Right cardiac atrium (tissue), 5 donors: ENCODE measurements at regions of chr2 and their contacts with region 1.

Region 1: GRCh38 chr2:71798266-71799012 is 345.1 kb downstream of the DYSF start:
- DNase-seq: peak in 1 of 3 donors; percentile 75
- ATAC-seq: peak; percentile 34 to 58
- H3K4me3 ChIP-seq: no peak overlapping the region
- H3K27ac ChIP-seq: no peak overlapping the region
- H3K4me1 ChIP-seq: peaks cover 8% of the 10 kb centered on the region
- H3K27me3 ChIP-seq: no peaks in the 10 kb centered on the region

Region 2: DNA sequence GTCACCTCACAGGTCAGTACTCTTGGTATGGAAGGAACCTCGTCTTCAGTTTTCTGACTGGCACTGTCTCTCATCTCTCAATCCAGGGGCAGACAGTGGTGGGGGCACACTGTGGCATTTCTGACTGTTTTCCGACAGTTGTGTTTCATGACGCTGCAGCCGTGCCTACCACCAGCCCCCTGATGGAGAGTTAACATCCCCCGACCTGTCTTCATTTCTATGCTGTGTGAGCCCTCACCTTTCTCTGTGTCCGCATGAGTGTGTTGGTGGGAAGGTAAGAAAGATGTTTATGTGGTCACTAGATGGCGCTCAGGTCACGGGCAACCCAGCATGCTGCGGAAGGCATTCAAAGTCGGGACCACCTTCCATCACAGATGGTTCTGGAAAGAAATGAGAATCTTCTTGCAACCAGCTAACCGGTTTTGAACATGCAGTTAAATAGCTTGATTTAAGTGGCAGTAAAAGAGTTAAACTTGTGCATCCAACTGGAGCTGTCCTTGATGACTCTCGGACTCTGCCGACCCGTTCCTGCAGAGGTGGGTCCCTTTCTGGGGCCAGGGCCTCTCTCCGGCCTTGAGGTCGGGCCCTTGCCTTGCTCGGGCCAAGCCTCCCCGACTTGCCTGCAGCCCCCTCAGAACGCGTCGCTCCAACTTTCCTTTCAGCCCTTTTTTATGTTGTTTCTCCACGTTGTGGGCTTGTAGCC is 252.7 kb before region 1 on chr2:
- intact Hi-C with region 1: loop called in 2 of 4 experiments (anchors 5 to 10 kb)
- DNase-seq: peak in 2 of 3 donors; percentile 61 to 74
- ATAC-seq: peak; percentile 66 to 75
- H3K4me3 ChIP-seq: no peak overlapping the region
- H3K27ac ChIP-seq: peak overlapping the region; percentile 50
- H3K4me1 ChIP-seq: no peaks in the 10 kb centered on the region
- H3K27me3 ChIP-seq: no peaks in the 10 kb centered on the region

Region 3: GRCh38 chr2:71558300-71559051 is 240.0 kb before region 1 on chr2:
- intact Hi-C with region 1: loop called in 1 of 4 experiments (anchors 10 kb)
- DNase-seq: peak in 1 of 3 donors; percentile 33
- ATAC-seq: no peak
- H3K4me3 ChIP-seq: no peak overlapping the region
- H3K27ac ChIP-seq: no peak overlapping the region
- H3K4me1 ChIP-seq: no peaks in the 10 kb centered on the region
- H3K27me3 ChIP-seq: no peaks in the 10 kb centered on the region

Region 4: GRCh38 chr2:71609958-71610357 is 188.5 kb before region 1 on chr2:
- intact Hi-C with region 1: loop called (anchors 10 kb)
- DNase-seq: no peak
- ATAC-seq: no peak
- H3K4me3 ChIP-seq: no peak overlapping the region
- H3K27ac ChIP-seq: no peak overlapping the region
- H3K4me1 ChIP-seq: peaks cover 12% of the 10 kb centered on the region
- H3K27me3 ChIP-seq: no peaks in the 10 kb centered on the region

Region 5: DNA sequence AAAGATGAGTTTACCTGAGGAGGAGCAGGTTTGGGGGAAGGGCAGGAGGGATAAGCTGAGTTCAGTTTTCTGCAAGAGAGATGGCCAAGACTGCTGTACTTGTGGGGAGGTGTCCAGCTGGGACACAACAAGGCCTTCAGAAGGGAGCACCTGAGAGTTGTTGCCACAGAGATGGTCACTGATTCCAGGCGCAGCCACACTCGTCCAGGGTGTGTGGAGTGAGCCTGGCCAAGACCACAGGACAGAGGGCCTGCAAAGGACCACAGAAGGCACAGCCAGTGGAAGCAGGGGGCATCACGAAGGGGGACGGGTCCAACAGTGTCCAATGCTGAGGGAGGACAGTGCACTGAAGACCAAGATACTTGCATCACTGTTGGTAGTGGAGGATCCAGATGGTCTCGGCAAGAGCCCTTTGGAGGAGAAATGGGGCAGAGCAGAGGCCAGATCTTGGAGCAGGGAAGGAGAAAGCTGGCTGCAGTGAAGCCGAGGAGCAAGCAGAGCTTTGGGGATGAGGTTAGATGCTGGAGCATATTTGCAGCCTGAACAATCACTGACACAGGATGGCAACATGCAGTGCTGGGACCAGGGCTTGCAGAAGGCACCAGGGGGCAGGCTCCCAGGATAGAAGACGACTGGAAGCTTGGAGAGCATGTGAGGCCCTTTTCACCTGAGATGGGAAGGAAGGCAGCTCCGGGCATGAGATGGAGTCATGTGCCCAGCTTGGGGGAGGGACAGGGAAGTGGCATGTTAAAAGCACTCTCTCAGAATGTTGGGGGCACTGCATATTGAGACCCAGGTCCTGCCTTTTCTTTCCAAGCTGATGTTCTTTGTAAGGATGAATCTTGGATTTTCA is 135.3 kb after region 1 on chr2:
- intact Hi-C with region 1: loop called in 1 of 4 experiments (anchors 10 kb)
- DNase-seq: peak in 1 of 3 donors; percentile 50
- ATAC-seq: no peak
- H3K4me3 ChIP-seq: no peak overlapping the region
- H3K27ac ChIP-seq: peak overlapping the region; percentile 39
- H3K4me1 ChIP-seq: peaks cover 2% of the 10 kb centered on the region
- H3K27me3 ChIP-seq: no peaks in the 10 kb centered on the region

Region 6: GRCh38 chr2:72012886-72013574 is 214.6 kb after region 1 on chr2:
- intact Hi-C with region 1: loop called in 1 of 4 experiments (anchors 10 kb)
- DNase-seq: no peak
- ATAC-seq: no peak
- H3K4me3 ChIP-seq: no peak overlapping the region
- H3K27ac ChIP-seq: no peak overlapping the region
- H3K4me1 ChIP-seq: no peaks in the 10 kb centered on the region
- H3K27me3 ChIP-seq: no peaks in the 10 kb centered on the region

Region 7: DNA sequence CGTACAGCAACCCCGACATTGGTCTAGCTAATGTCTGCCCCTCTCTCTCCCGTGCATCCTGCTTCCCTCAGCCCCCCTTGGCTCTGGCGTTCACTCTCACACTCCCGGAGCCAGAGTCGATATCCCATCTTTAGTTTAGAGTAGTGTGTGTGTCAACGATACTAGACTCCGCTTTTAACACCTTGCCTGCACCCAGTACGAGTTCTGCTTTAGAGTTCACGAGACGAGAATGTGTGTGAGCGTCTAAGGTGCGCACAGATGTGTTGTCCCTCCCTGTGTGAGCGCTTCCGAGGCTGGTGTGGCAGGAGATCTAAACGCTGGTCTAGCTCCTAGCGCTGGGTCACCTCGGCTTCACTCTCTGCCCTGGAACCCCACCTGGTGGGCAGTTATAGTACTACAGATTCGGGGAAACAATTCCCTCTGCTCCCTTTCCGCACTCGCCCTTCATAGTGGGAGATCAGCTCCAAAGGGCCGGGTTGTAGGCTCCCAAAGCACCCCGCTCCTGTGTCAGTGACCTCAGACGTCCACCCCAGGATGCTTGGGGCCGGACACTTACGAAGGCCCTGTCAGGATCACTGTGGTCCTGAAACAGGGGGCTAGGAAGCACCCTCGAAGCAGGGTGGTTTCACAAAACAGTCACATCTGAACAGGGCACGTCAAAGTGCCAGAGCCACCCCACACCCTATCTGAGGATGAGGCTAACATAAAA is 351.9 kb after region 1 on chr2:
- intact Hi-C with region 1: loop called in 2 of 4 experiments (anchors 2 to 5 kb)
- DNase-seq: peak; percentile 69 to 84 (median 82)
- ATAC-seq: peak; percentile 75 to 80
- H3K4me3 ChIP-seq: peak overlapping the region; percentile 68
- H3K27ac ChIP-seq: no peak overlapping the region
- H3K4me1 ChIP-seq: peaks cover 3% of the 10 kb centered on the region
- H3K27me3 ChIP-seq: no peaks in the 10 kb centered on the region